Activated CD4-positive, alpha-beta memory T cell treated with anti-CD3 and anti-CD28 coated beads, Interleukin-2, amount 10 ng/mL, durations not matched to agents 7 days and 5 days (primary cell): ENCODE measurements at regions of chr12 and their contacts with region 1.

Region 1: GRCh38 chr12:98572010-98572409 is 21.5 kb upstream of the SLC25A3 start:
- DNase-seq: no peak
- H3K4me3 Mint-ChIP-seq: no peak overlapping the region
- H3K27ac Mint-ChIP-seq: no peak overlapping the region
- H3K4me1 Mint-ChIP-seq: no peaks in the 10 kb centered on the region
- H3K27me3 Mint-ChIP-seq: no peaks in the 10 kb centered on the region

Region 2: DNA sequence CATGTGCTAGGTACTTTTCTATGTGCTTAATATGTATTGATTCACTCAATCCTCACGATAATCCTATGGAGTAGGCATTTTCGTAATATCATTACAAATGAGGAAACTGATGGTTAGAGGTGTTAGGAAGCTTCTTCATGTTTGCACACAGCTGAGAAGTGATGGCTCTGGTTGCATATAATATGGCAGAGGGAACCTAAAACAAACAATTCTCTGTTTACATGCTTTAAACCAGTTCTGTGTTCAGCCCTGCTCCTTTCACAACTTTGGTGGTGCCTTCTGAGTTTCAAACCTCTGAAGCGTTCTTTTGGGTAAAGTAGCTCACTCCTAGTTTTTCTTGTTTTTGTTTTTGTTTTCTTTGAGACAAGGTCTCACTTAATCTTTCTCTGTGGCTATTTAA is 21.2 kb before region 1 on chr12:
- CTCF ChIA-PET with region 1: interaction called, 16 read pairs
- POLR2A ChIA-PET with region 1: interaction called, 4 read pairs
- DNase-seq: no peak
- H3K4me3 Mint-ChIP-seq: no peak overlapping the region
- H3K27ac Mint-ChIP-seq: no peak overlapping the region
- H3K4me1 Mint-ChIP-seq: no peaks in the 10 kb centered on the region
- H3K27me3 Mint-ChIP-seq: no peaks in the 10 kb centered on the region

Region 3: GRCh38 chr12:98653866-98654493 is 82.0 kb after region 1 on chr12:
- CTCF ChIA-PET with region 1: interaction called, 41 read pairs
- POLR2A ChIA-PET with region 1: interaction called, 3 read pairs
- DNase-seq: no peak
- H3K4me3 Mint-ChIP-seq: no peak overlapping the region
- H3K27ac Mint-ChIP-seq: no peak overlapping the region
- H3K4me1 Mint-ChIP-seq: peaks cover 24% of the 10 kb centered on the region
- H3K27me3 Mint-ChIP-seq: no peaks in the 10 kb centered on the region

Region 4: DNA sequence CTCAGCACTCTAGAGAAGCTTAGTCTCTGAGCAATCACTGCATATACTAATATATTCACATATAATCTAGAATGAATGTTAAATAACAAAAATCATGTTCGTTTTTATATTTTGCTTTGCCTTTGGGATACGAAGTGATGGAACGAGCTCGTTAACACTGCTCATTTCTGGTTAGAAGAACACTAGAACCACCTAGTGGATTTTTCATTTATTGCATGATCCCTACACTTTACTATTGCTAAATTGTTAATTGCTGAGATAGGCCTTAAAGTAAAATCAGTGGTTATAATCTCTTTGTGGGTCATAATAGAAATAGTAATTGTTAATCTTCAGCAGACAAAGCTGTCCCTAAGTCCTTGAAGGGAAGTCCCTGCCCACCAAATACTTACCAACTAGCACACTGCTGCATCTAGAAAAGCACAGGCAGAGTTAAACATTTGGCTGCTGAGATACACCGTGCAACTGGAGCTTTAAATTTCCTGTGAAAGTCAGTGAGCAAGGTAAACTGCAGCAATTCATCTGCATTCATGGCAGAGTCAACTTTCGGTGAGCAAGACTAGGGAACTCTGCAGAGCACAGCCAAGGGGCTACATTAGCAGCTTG is 426.8 kb after region 1 on chr12:
- CTCF ChIA-PET with region 1: interaction called, 24 read pairs
- POLR2A ChIA-PET with region 1: no interaction called
- DNase-seq: no peak
- H3K4me3 Mint-ChIP-seq: no peak overlapping the region
- H3K27ac Mint-ChIP-seq: no peak overlapping the region
- H3K4me1 Mint-ChIP-seq: no peaks in the 10 kb centered on the region
- H3K27me3 Mint-ChIP-seq: peaks cover 14% of the 10 kb centered on the region